Activated naive CD4-positive, alpha-beta T cell treated with anti-CD3 and anti-CD28 coated beads for 36 hours (primary cell): ENCODE measurements at regions of chr3 and their contacts with region 1.

Region 1: GRCh38 chr3:128123538-128124368 is at the start of gene RUVBL1:
- DNase-seq: peak; percentile 99
- H3K4me3 Mint-ChIP-seq: peak within 1 kb of the TSS; percentile 93
- H3K27ac Mint-ChIP-seq: peak within 1 kb of the TSS; percentile 86
- H3K4me1 Mint-ChIP-seq: peaks cover 29% of the 10 kb centered on the region
- H3K27me3 Mint-ChIP-seq: no peaks in the 10 kb centered on the region
- total RNA-seq, gene RUVBL1: 71.6 to 73.1 TPM

Region 2: GRCh38 chr3:127598841-127599570 is 524.7 kb before region 1 on chr3:
- CTCF ChIA-PET with region 1: no interaction called
- intact Hi-C with region 1: loop called (anchors 5 kb)
- DNase-seq: no peak
- H3K4me3 Mint-ChIP-seq: peak overlapping the region; percentile 84
- H3K27ac Mint-ChIP-seq: peak overlapping the region; percentile 89
- H3K4me1 Mint-ChIP-seq: peaks cover 40% of the 10 kb centered on the region
- H3K27me3 Mint-ChIP-seq: no peaks in the 10 kb centered on the region

Region 3: DNA sequence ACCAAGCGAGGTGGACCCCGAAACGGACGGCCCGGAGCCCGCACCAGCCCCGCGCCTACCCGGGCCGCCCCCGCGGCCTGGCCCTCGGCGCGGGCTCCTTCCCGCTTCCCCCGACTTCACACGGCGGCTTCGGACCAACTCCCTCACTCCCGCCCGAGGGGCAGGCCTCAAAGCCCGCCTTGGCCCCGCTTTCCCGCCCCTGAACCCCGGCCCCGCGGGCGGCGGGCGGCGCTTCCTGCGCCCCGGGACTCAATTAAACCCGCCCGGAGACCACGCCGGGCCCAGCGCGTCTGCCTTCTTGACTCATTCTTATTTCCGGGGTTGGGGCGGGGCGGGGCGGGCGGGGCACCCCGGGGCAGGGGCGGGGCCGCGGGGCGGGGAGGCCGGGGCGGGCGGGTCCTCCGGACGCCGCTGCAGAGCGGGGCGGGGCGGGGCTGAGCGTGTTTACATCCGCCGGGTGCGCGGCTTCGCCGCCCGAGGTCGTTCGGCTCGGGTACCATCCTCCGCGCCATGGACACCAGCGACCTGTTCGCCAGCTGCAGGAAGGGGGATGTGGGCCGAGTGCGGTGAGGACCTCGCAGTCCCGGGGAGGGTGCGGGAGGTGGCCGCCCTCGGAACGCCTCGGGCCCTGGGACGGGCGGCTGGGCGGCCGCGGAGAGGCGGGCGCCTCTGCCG is 451.1 kb before region 1 on chr3 and contains the start of gene ABTB1:
- CTCF ChIA-PET with region 1: no interaction called
- intact Hi-C with region 1: loop called (anchors 5 kb)
- DNase-seq: peak; percentile 89
- H3K4me3 Mint-ChIP-seq: peak within 1 kb of the TSS; percentile 86
- H3K27ac Mint-ChIP-seq: peak within 1 kb of the TSS; percentile 87
- H3K4me1 Mint-ChIP-seq: peaks cover 21% of the 10 kb centered on the region
- H3K27me3 Mint-ChIP-seq: no peaks in the 10 kb centered on the region
- total RNA-seq, gene ABTB1: 10.6 to 13.5 TPM

Region 4: GRCh38 chr3:128051837-128052594 is 71.7 kb before region 1 on chr3 and contains the start of gene SEC61A1:
- CTCF ChIA-PET with region 1: interaction called, 4 read pairs
- intact Hi-C with region 1: loop called (anchors 1 kb)
- DNase-seq: peak; percentile 95
- H3K4me3 Mint-ChIP-seq: peak within 1 kb of the TSS; percentile 91
- H3K27ac Mint-ChIP-seq: peak within 1 kb of the TSS; percentile 95
- H3K4me1 Mint-ChIP-seq: peaks cover 40% of the 10 kb centered on the region
- H3K27me3 Mint-ChIP-seq: peaks cover under 1% of the 10 kb centered on the region
- total RNA-seq, gene SEC61A1: 115 to 119 TPM

Region 5: GRCh38 chr3:128095222-128095703 is 28.5 kb before region 1 on chr3:
- CTCF ChIA-PET with region 1: interaction called, 11 read pairs
- intact Hi-C with region 1: no loop called
- DNase-seq: peak; percentile 87
- H3K4me3 Mint-ChIP-seq: no peak overlapping the region
- H3K27ac Mint-ChIP-seq: no peak overlapping the region
- H3K4me1 Mint-ChIP-seq: peaks cover 5% of the 10 kb centered on the region
- H3K27me3 Mint-ChIP-seq: no peaks in the 10 kb centered on the region

Region 6: GRCh38 chr3:128112357-128112968 is 11.3 kb before region 1 on chr3:
- CTCF ChIA-PET with region 1: no interaction called
- intact Hi-C with region 1: loop called (anchors 1 kb)
- DNase-seq: peak; percentile 59
- H3K4me3 Mint-ChIP-seq: no peak overlapping the region
- H3K27ac Mint-ChIP-seq: peak overlapping the region; percentile 79
- H3K4me1 Mint-ChIP-seq: peaks cover 38% of the 10 kb centered on the region
- H3K27me3 Mint-ChIP-seq: no peaks in the 10 kb centered on the region

Region 7: DNA sequence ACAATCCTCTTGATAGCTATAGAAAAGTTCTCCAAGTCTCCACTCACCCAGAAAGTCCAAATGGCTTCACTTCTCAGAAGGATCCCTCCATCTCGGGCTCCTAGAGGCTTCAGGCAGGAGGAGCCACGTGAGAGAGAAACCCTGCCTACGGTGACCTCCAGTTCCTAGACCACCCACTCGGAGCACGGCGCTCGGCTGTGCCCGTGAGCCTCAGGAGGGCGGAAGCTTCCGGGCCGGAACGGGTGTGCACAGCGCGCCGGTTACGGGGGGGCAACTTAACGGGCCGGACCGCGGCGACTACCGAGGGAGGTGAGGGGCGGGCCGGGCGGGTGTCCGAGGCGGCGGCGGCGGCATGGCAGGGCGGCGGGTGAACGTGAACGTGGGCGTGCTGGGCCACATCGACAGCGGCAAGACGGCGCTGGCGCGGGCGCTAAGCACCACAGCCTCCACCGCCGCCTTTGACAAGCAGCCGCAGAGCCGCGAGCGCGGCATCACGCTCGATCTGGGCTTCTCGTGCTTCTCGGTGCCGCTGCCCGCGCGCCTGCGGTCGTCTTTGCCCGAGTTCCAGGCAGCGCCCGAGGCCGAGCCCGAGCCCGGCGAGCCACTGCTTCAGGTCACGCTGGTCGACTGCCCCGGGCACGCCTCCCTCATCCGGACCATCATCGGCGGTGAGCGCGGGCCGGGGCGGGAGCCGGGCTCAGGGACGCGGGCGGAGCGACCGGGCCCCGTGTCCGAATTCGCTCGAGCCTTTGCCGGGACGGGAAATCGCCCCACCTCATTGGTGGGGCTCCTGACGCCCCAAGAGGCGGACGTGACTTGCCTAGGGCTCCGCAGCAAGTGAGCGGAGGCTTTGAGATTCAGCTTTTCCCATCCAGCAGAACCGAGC is 29.6 kb after region 1 on chr3 and contains the start of gene EEFSEC:
- CTCF ChIA-PET with region 1: no interaction called
- intact Hi-C with region 1: loop called (anchors 1 kb)
- DNase-seq: peak; percentile 87
- H3K4me3 Mint-ChIP-seq: peak within 1 kb of the TSS; percentile 89
- H3K27ac Mint-ChIP-seq: peak within 1 kb of the TSS; percentile 90
- H3K4me1 Mint-ChIP-seq: peaks cover 27% of the 10 kb centered on the region
- H3K27me3 Mint-ChIP-seq: no peaks in the 10 kb centered on the region
- total RNA-seq, gene EEFSEC: 11.0 to 11.6 TPM